H1 (cell line): ENCODE measurements at regions of chr12 and their contacts with region 1.

Region 1: GRCh38 chr12:125183187-125184067 is 118.2 kb downstream of the AACS start:
- DNase-seq: peak in 1 of 2 experiments; percentile 98
- H3K4me3 ChIP-seq: peak overlapping the region in 3 of 4 experiments; percentile 29 to 43 (median 40); a peak in 5 of 8 replicates
- H3K27ac ChIP-seq: no peak overlapping the region
- H3K4me1 ChIP-seq: peaks cover 11 to 26% (median 14%) of the 10 kb centered on the region in 4 experiments
- H3K27me3 ChIP-seq: peaks cover 0 to 11% (median 5%) of the 10 kb centered on the region in 4 experiments; a peak in 4 of 7 replicates
- CTCF ChIP-seq: peak in 2 of 3 experiments; percentile 98 to 100; a peak in 3 of 4 replicates
- EP300 ChIP-seq: peak in 1 of 2 experiments; percentile 48; a peak in 1 of 3 replicates
- POLR2A ChIP-seq: no peak
- RAD21 ChIP-seq: peak; percentile 99 to 100

Region 2: DNA sequence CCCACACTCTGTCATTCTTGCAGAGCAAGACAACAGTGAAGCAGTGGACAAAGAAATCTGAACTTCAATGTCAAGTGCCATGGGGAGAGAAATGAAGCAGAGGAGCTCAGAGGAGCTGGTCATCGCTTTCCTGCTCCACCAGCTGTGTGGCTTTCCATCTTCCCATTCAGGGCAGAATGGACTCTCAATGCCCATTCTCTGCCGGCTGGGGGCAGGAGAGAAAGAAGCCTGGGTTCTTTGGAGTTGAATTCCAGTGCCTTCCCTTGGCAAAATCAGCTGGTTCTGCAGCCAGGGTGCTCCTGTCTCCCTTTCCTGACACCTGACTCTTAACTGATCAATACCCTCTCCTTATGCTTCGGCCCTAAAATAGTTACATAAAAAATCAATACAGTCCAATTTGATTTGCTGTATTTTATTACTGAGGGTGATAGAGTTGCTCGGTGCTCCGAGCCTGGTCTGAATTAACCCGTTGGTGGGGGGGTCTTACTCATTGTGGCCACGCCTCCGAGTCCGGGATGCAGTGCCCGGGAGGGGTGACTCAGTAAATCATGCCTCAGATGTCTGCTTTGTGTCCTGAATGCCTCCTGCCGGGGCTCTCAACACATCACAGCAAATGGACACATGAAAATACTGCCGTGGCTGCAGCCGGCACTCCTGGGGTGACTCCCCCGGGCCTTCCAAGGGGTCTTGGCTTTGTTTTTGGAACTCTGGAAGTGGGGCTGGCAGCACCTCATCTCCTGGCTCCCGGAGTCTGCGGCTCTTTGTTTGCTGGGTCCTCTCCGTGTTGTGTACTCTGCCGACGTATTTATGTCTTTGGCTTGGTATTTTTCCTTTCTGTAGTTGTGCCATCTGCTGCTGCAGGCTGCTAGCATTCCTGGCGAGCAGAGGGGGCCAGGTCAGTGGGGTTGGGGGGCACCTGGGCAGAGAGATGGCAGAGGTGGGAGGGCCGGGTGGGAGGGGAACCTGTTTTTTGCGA is 10.7 kb after region 1 on chr12:
- CTCF ChIA-PET with region 1: interaction called, 23 read pairs
- POLR2A ChIA-PET with region 1: interaction called, 30 read pairs
- DNase-seq: peak in 1 of 2 experiments; percentile 60
- H3K4me3 ChIP-seq: peak overlapping the region in 3 of 4 experiments; percentile 17 to 44 (median 36); a peak in 4 of 8 replicates
- H3K27ac ChIP-seq: no peak overlapping the region
- H3K4me1 ChIP-seq: peaks cover 22 to 41% (median 29%) of the 10 kb centered on the region in 4 experiments
- H3K27me3 ChIP-seq: no peaks in the 10 kb centered on the region; a peak in 1 of 7 replicates
- CTCF ChIP-seq: peak in 2 of 3 experiments; percentile 18 to 43; a peak in 1 of 4 replicates
- EP300 ChIP-seq: no peak
- POLR2A ChIP-seq: peak in 1 of 2 experiments; percentile 36; a peak in 1 of 3 replicates
- RAD21 ChIP-seq: peak; percentile 13 to 30; a peak in 2 of 4 replicates

Region 3: GRCh38 chr12:125203145-125203765 is 19.8 kb after region 1 on chr12:
- CTCF ChIA-PET with region 1: interaction called, 23 read pairs
- POLR2A ChIA-PET with region 1: interaction called, 30 read pairs
- DNase-seq: no peak
- H3K4me3 ChIP-seq: no peak overlapping the region
- H3K27ac ChIP-seq: no peak overlapping the region
- H3K4me1 ChIP-seq: peaks cover 0 to 7% (median 3%) of the 10 kb centered on the region in 4 experiments; a peak in 4 of 7 replicates
- H3K27me3 ChIP-seq: no peaks in the 10 kb centered on the region
- CTCF ChIP-seq: peak in 2 of 3 experiments; percentile 22 to 53; a peak in 2 of 4 replicates
- EP300 ChIP-seq: no peak
- POLR2A ChIP-seq: no peak
- RAD21 ChIP-seq: peak in 1 of 2 experiments; percentile 13; a peak in 1 of 4 replicates

Region 4: GRCh38 chr12:125240717-125241116 is 57.3 kb after region 1 on chr12:
- CTCF ChIA-PET with region 1: interaction called, 12 read pairs
- POLR2A ChIA-PET with region 1: interaction called, 3 read pairs
- DNase-seq: no peak
- H3K4me3 ChIP-seq: no peak overlapping the region
- H3K27ac ChIP-seq: no peak overlapping the region
- H3K4me1 ChIP-seq: peaks cover 2 to 12% (median 4%) of the 10 kb centered on the region in 4 experiments; a peak in 6 of 7 replicates
- H3K27me3 ChIP-seq: no peaks in the 10 kb centered on the region
- CTCF ChIP-seq: no peak
- EP300 ChIP-seq: no peak
- POLR2A ChIP-seq: no peak
- RAD21 ChIP-seq: no peak

Region 5: GRCh38 chr12:125402874-125403789 is 219.7 kb after region 1 on chr12:
- CTCF ChIA-PET with region 1: interaction called, 11 read pairs
- POLR2A ChIA-PET with region 1: interaction called, 3 read pairs
- DNase-seq: peak; percentile 64 to 66
- H3K4me3 ChIP-seq: no peak overlapping the region
- H3K27ac ChIP-seq: no peak overlapping the region
- H3K4me1 ChIP-seq: peaks cover 0 to 7% (median 0%) of the 10 kb centered on the region in 4 experiments; a peak in 1 of 7 replicates
- H3K27me3 ChIP-seq: no peaks in the 10 kb centered on the region
- CTCF ChIP-seq: peak in 2 of 3 experiments; percentile 70 to 74; a peak in 3 of 4 replicates
- EP300 ChIP-seq: no peak
- POLR2A ChIP-seq: no peak
- RAD21 ChIP-seq: peak; percentile 91 to 95